Heart right ventricle (tissue), 16 donors: ENCODE measurements at regions of chr18 and their contacts with region 1.

Region 1: DNA sequence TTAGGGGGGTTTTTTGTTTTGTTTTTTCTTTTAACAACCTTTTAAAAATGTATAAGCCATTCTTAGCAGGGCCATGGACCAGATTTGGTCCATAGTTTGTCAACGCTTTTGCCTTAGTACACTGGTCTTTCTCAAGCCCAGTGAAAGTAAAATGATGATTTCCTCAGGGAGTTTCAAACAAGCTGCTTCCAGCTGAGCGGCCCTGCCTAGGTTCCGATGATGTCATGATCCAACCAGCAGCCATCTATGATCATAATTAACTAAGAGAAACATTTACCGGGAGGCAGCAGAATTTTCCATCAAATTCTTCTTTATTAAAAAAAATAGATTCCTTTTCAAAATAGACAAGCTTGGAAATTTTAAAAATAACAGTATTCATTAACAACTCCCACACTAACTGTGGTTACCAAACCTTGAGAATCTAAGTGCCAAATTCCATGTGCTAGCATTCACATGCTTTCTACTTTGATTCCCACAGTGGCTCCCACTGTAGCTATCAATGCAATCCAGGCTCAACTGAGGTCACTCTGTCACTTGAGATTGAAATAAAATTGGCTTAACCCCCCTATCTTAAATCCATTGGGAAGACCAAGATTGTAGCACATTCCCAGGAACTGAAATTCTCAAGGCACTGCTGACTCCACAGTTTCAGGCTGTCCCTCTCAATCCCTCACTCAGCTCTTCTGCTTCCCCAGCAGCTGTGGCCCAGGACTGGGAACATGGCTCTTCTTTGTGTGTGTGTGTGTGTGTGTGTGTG is 148.9 kb downstream of the RNF152 start:
- DNase-seq: peak; percentile 32 to 76
- ATAC-seq: peak; percentile 63 to 82 (median 70)
- H3K4me3 ChIP-seq: no peak overlapping the region
- H3K27ac ChIP-seq: peak overlapping the region; percentile 60 to 92 (median 81)
- H3K4me1 ChIP-seq: peaks cover 6 to 74% (median 39%) of the 10 kb centered on the region in 9 donors
- H3K27me3 ChIP-seq: no peaks in the 10 kb centered on the region
- CTCF ChIP-seq: no peak

Region 2: GRCh38 chr18:61635901-61636528 is 107.9 kb before region 1 on chr18:
- intact Hi-C with region 1: loop called in 3 of 10 experiments (anchors 5 kb)
- DNase-seq: peak; percentile 32 to 57
- ATAC-seq: peak; percentile 77 to 89 (median 85)
- H3K4me3 ChIP-seq: peak overlapping the region in 4 of 10 donors; percentile 9 to 21 (median 12)
- H3K27ac ChIP-seq: peak overlapping the region in 9 of 10 donors; percentile 1 to 73 (median 66)
- H3K4me1 ChIP-seq: peaks cover 0 to 24% (median 10%) of the 10 kb centered on the region in 9 donors
- H3K27me3 ChIP-seq: no peaks in the 10 kb centered on the region
- CTCF ChIP-seq: peak; percentile 87 to 95 (median 91)

Region 3: DNA sequence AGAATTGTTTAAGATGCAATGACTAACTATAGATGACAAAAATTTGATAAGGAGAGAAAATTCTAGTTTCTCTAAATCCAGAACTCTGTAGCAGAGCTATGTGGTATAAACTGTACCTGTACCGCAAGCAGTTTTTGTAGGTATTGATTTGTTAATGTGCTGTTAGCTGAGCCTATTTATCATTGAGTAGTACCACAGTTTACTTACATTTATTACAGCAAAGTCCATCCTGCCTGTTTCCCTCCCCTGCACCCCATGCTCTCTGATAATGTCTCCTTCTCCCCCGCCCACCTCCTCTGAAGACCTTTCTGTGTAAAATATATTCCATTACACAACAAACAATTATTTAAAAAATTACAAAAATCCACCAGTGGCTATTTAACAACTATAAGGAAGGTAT is 21.7 kb before region 1 on chr18:
- intact Hi-C with region 1: loop called in 1 of 10 experiments (anchors 2 kb)
- DNase-seq: no peak
- ATAC-seq: no peak
- H3K4me3 ChIP-seq: no peak overlapping the region
- H3K27ac ChIP-seq: no peak overlapping the region
- H3K4me1 ChIP-seq: peaks cover 0 to 14% (median 0%) of the 10 kb centered on the region in 9 donors
- H3K27me3 ChIP-seq: no peaks in the 10 kb centered on the region
- CTCF ChIP-seq: no peak

Region 4: GRCh38 chr18:61827591-61827990 is 83.6 kb after region 1 on chr18:
- intact Hi-C with region 1: loop called in 2 of 10 experiments (anchors 2 to 5 kb)
- DNase-seq: no peak
- ATAC-seq: no peak
- H3K4me3 ChIP-seq: no peak overlapping the region
- H3K27ac ChIP-seq: no peak overlapping the region
- H3K4me1 ChIP-seq: peaks cover 0 to 66% (median 21%) of the 10 kb centered on the region in 9 donors
- H3K27me3 ChIP-seq: peaks cover 0 to 27% (median 0%) of the 10 kb centered on the region in 7 donors
- CTCF ChIP-seq: no peak

Region 5: DNA sequence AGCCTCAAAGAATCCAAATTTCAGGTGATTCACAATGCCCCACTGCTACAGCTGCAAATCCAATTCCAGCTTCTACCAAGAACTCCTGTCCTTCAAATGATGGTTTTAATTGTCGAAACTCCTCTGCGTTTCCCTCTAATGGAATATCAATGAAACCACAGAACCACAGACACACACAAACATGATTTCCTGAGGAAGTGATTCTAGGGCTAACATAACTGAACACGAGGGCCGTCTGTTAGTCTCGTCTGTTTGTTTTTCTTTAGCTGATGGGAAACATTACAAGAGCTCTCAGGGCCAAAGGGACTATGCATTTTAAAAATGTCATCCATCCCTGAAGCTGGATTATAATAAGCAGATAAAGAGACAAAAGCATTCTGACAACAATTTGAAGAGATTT is 89.4 kb after region 1 on chr18:
- intact Hi-C with region 1: loop called in 1 of 10 experiments (anchors 5 kb)
- DNase-seq: no peak
- ATAC-seq: peak in 7 of 8 donors; percentile 35 to 75 (median 63)
- H3K4me3 ChIP-seq: peak overlapping the region in 1 of 10 donors; percentile 5
- H3K27ac ChIP-seq: peak overlapping the region in 6 of 10 donors; percentile 8 to 71 (median 44)
- H3K4me1 ChIP-seq: peaks cover 3 to 69% (median 36%) of the 10 kb centered on the region in 9 donors
- H3K27me3 ChIP-seq: peaks cover 0 to 47% (median 0%) of the 10 kb centered on the region in 7 donors
- CTCF ChIP-seq: no peak

Region 6: GRCh38 chr18:61893971-61894750 is 150.2 kb after region 1 on chr18:
- intact Hi-C with region 1: loop called in 6 of 10 experiments (anchors 2 to 5 kb)
- DNase-seq: peak; percentile 87
- ATAC-seq: peak; percentile 90 to 96 (median 94)
- H3K4me3 ChIP-seq: peak overlapping the region; percentile 32 to 97 (median 90)
- H3K27ac ChIP-seq: peak overlapping the region; percentile 79 to 96 (median 90)
- H3K4me1 ChIP-seq: peaks cover 0 to 50% (median 31%) of the 10 kb centered on the region in 9 donors
- H3K27me3 ChIP-seq: peaks cover 0 to 61% (median 0%) of the 10 kb centered on the region in 7 donors
- CTCF ChIP-seq: peak; percentile 16 to 71 (median 37)